Heart right ventricle (tissue), 16 donors: ENCODE measurements at regions of chr2 and their contacts with region 1.

Region 1: DNA sequence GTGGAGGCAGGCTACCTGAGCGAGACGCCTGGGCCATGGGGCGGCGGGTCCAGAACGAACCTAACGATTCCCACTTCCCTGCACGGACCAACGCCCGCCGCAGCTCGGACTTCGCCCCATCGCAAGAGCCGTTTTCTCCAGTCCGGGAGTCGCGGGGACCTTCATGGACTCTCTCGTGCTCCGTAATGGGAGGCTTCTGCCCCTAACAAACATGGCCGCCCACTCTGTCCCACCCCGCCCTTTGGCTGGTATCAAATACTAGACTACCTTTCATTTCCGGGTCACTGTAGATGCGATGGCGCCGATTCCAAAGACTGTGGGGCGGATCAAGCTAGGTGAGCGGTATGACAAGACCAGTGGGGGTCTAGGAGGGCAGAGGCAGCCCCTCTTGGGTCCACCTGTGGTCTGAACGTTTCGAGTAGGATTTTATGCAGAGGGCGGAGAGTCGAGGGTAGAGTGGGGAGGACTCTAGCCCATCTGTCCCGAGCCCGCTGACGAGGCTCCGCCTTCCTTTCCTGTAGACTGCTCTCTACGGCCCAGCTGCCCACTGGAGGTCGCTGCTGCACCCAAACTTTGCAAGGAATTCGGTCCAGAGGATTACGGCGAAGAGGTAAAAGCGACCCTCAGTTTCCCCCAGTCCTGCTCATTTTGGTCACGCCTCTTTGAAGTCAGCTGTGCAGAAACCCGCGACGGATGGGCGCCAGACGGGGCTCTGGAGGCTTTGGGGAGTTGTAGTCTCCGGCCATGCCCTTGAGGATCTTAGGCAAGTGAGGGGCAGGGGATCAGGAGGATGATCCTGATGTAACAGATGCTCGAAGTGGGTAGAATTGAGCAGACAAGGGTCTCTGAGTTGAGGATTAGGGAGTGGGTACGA is at the starts of genes CCDC142 and TTC31:
- DNase-seq: peak; percentile 94 to 98
- ATAC-seq: peak; percentile 98 to 99 (median 99)
- H3K4me3 ChIP-seq: peak within 1 kb of the TSS; percentile 74 to 97 (median 88)
- H3K27ac ChIP-seq: peak within 1 kb of the TSS; percentile 78 to 94 (median 90)
- H3K4me1 ChIP-seq: peaks cover 10 to 40% (median 29%) of the 10 kb centered on the region in 9 donors
- H3K27me3 ChIP-seq: no peaks in the 10 kb centered on the region
- CTCF ChIP-seq: peak; percentile 81 to 98 (median 88)
- total RNA-seq, gene CCDC142: 2.3 to 11.7 (median 5.5) TPM
- total RNA-seq, gene TTC31: 7.2 to 12.1 (median 9.4) TPM

Region 2: GRCh38 chr2:74304332-74305148 is 178.5 kb before region 1 on chr2:
- intact Hi-C with region 1: no loop called
- DNase-seq: no peak
- ATAC-seq: peak in 3 of 8 donors; percentile 39 to 44 (median 41)
- H3K4me3 ChIP-seq: no peak overlapping the region
- H3K27ac ChIP-seq: no peak overlapping the region
- H3K4me1 ChIP-seq: peaks cover 0 to 8% (median 0%) of the 10 kb centered on the region in 9 donors
- H3K27me3 ChIP-seq: no peaks in the 10 kb centered on the region
- CTCF ChIP-seq: no peak

Region 3: DNA sequence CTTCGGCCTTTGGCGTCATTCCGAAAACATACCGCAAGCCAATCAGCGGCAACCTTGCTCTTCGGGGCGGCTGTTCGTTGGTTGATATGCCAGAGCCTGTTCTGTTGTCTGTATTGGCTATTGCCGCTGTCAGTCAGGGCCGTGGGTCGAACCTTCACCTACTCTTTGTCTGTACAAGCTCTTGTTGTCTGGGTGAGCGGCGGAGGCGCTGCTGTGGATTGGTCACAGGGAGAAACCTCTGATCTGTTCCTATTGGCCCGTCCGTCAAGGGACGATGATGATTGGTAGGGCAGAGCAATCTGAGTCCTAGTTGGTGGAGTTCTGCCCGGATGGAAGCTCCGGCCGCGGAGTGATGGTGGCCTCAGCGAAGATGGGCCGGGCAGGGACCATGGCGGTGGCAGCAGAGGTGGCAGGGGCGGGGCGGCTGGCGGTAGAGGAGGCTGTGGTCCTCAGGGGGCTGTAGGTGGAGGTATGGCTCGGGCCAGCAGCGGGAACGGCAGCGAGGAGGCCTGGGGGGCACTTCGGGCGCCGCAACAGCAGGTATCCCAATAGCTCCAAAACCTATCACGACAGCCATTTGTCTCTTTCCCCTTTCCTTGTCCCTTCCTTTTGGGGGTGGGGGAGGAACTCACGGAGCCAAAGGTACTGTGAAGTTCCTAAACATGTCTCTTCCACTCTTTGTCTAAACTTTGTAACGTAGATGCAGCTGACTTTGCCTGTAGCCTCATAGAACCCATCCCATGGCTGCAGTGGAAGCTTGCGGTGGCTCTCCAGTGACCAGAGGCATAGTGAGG is 24.7 kb before region 1 on chr2 and contains the start of gene WBP1:
- intact Hi-C with region 1: loop called in 2 of 10 experiments (anchors 1 kb)
- DNase-seq: peak; percentile 98 to 100
- ATAC-seq: peak; percentile 92 to 95 (median 94)
- H3K4me3 ChIP-seq: peak within 1 kb of the TSS; percentile 57 to 90 (median 80)
- H3K27ac ChIP-seq: peak within 1 kb of the TSS; percentile 88 to 98 (median 96)
- H3K4me1 ChIP-seq: peaks cover 14 to 42% (median 36%) of the 10 kb centered on the region in 9 donors
- H3K27me3 ChIP-seq: no peaks in the 10 kb centered on the region
- CTCF ChIP-seq: no peak
- total RNA-seq, gene WBP1: 34.8 to 54.1 (median 45.8) TPM

Region 4: GRCh38 chr2:74507145-74507925 is 24.3 kb after region 1 on chr2 and contains the start of gene PCGF1:
- intact Hi-C with region 1: loop called in 2 of 10 experiments (anchors 1 to 2 kb)
- DNase-seq: peak; percentile 99
- ATAC-seq: peak; percentile 95 to 97 (median 96)
- H3K4me3 ChIP-seq: peak within 1 kb of the TSS; percentile 64 to 83 (median 70)
- H3K27ac ChIP-seq: peak within 1 kb of the TSS; percentile 95 to 99 (median 96)
- H3K4me1 ChIP-seq: peaks cover 8 to 55% (median 43%) of the 10 kb centered on the region in 9 donors
- H3K27me3 ChIP-seq: peaks cover 0 to 56% (median 43%) of the 10 kb centered on the region in 7 donors
- CTCF ChIP-seq: peak in 8 of 9 donors; percentile 40 to 67 (median 49)
- total RNA-seq, gene PCGF1: 10.7 to 27.4 (median 14.9) TPM

Region 5: DNA sequence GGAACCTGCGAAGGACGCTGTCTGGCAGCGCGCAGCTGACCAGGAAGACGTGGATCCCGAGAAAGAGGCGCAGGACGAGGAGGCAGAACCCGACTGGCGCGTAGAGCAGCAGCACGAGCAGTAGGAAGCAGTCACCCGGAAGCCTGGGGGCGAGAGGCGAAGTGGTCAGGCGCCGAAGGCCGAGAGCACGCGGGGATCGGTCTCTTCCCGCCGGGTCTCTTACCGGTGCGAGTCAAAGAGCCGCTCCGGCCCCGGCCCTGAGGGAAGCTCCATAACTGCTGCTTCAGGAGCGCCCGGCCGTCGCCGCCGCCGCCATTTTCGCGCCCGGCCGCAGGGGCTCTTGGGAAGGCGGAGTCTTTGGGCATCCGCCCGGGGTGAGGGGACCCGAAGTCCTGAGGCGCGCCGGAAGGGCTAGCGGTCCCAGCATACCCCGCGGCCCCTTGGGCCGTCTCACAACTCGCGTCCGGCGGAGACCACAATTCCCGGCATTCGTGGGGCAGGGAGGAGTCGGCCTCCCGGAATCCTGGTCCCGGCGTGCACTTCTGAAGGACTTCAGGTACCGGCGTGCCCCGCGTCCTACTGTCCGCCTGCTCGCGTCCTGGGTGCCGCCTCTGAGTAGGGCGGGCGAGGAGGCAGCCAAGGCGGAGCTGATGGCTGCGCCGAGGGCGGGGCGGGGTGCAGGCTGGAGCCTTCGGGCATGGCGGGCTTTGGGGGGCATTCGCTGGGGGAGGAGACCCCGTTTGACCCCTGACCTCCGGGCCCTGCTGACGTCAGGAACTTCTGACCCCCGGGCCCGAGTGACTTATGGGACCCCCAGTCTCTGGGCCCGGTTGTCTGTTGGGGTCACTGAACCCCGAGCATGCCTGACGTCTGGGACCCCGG is 46.6 kb after region 1 on chr2 and contains the starts of genes AUP1 and HTRA2:
- intact Hi-C with region 1: loop called in 5 of 10 experiments (anchors 1 to 5 kb)
- DNase-seq: peak; percentile 98
- ATAC-seq: peak; percentile 94 to 98 (median 96)
- H3K4me3 ChIP-seq: peak within 1 kb of the TSS; percentile 63 to 97 (median 88)
- H3K27ac ChIP-seq: peak within 1 kb of the TSS; percentile 72 to 95 (median 91)
- H3K4me1 ChIP-seq: peaks cover 12 to 35% (median 31%) of the 10 kb centered on the region in 9 donors
- H3K27me3 ChIP-seq: no peaks in the 10 kb centered on the region
- CTCF ChIP-seq: no peak
- total RNA-seq, gene AUP1: 31.4 to 74.2 (median 38.2) TPM
- total RNA-seq, gene HTRA2: 21.2 to 29.6 (median 24.9) TPM